ENCODE measurements at regions of chr5 and their contacts with region 1.

Region 1: GRCh38 chr5:148730943-148731861 is 76.9 kb upstream of the HTR4 start:
- DNase-seq: peak; percentile 66 to 90 (median 70)
- ATAC-seq: peak; percentile 89
- H3K4me3 ChIP-seq: no peak overlapping the region
- H3K27ac ChIP-seq: no peak overlapping the region
- H3K4me1 ChIP-seq: peaks cover 0 to 21% of the 10 kb centered on the region in 2 experiments; a peak in 3 of 5 replicates
- H3K27me3 ChIP-seq: peaks cover 0 to 5% of the 10 kb centered on the region in 2 experiments; a peak in 1 of 5 replicates
- CTCF ChIP-seq: peak; percentile 93 to 100 (median 98)
- EP300 ChIP-seq: no peak
- POLR2A ChIP-seq: no peak
- RAD21 ChIP-seq: peak; percentile 97 to 99

Region 2: GRCh38 chr5:147857302-147858129 is 873.7 kb before region 1 on chr5:
- CTCF ChIA-PET with region 1: interaction called, 3 read pairs
- POLR2A ChIA-PET with region 1: no interaction called
- in situ Hi-C with region 1: no loop called
- intact Hi-C with region 1: loop called (anchors 2 kb)
- DNase-seq: peak; percentile 31 to 66 (median 58)
- ATAC-seq: peak; percentile 72
- H3K4me3 ChIP-seq: no peak overlapping the region
- H3K27ac ChIP-seq: no peak overlapping the region
- H3K4me1 ChIP-seq: no peaks in the 10 kb centered on the region
- H3K27me3 ChIP-seq: no peaks in the 10 kb centered on the region
- CTCF ChIP-seq: peak; percentile 60 to 68 (median 66)
- EP300 ChIP-seq: no peak
- POLR2A ChIP-seq: no peak
- RAD21 ChIP-seq: peak; percentile 71

Region 3: GRCh38 chr5:148179234-148179824 is 551.9 kb before region 1 on chr5:
- CTCF ChIA-PET with region 1: interaction called, 28 read pairs
- POLR2A ChIA-PET with region 1: no interaction called
- in situ Hi-C with region 1: loop called (anchors 5 kb)
- intact Hi-C with region 1: loop called (anchors 1 kb)
- DNase-seq: peak in 3 of 4 experiments; percentile 6 to 67 (median 6)
- ATAC-seq: peak; percentile 67; the same call in 2 of the 3 replicates
- H3K4me3 ChIP-seq: no peak overlapping the region
- H3K27ac ChIP-seq: no peak overlapping the region
- H3K4me1 ChIP-seq: no peaks in the 10 kb centered on the region
- H3K27me3 ChIP-seq: no peaks in the 10 kb centered on the region
- CTCF ChIP-seq: peak; percentile 48 to 71 (median 61); a peak in 5 of 6 replicates
- EP300 ChIP-seq: no peak
- POLR2A ChIP-seq: no peak
- RAD21 ChIP-seq: peak; percentile 89

Region 4: DNA sequence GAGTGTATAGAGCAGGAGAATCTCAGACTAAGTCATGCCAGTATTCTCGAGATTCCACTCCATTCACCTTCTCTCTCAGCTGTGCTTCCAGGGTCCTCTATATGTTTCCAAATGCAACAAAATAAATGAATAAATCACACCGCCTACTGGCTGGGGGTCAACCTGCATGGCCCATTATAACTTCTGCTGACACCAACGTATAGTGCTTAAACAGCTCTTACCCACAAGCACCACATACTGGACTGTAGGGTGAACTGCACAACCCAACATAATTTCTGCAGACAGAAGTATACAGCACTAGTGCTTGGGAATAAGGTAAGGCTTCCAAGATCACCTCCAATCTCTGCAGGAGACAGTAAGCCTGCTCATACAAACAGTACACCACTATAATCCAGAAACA is 43.8 kb before region 1 on chr5:
- CTCF ChIA-PET with region 1: no interaction called
- POLR2A ChIA-PET with region 1: interaction called, 3 read pairs
- in situ Hi-C with region 1: no loop called
- intact Hi-C with region 1: loop called (anchors 1 kb)
- DNase-seq: peak; percentile 72 to 85 (median 75)
- ATAC-seq: peak; percentile 97
- H3K4me3 ChIP-seq: no peak overlapping the region
- H3K27ac ChIP-seq: no peak overlapping the region
- H3K4me1 ChIP-seq: peaks cover 0 to 25% of the 10 kb centered on the region in 2 experiments; a peak in 3 of 5 replicates
- H3K27me3 ChIP-seq: no peaks in the 10 kb centered on the region
- CTCF ChIP-seq: peak; percentile 96 to 99 (median 99)
- EP300 ChIP-seq: peak; percentile 13; the same call in 1 of the 2 replicates
- POLR2A ChIP-seq: no peak
- RAD21 ChIP-seq: peak; percentile 62 to 98

Region 5: GRCh38 chr5:149035372-149035790 is 304.2 kb after region 1 on chr5:
- CTCF ChIA-PET with region 1: interaction called, 22 read pairs
- POLR2A ChIA-PET with region 1: no interaction called
- in situ Hi-C with region 1: loop called (anchors 10 kb)
- intact Hi-C with region 1: loop called (anchors 1 kb)
- DNase-seq: peak; percentile 52 to 74 (median 56)
- ATAC-seq: peak; percentile 99
- H3K4me3 ChIP-seq: no peak overlapping the region
- H3K27ac ChIP-seq: no peak overlapping the region
- H3K4me1 ChIP-seq: no peaks in the 10 kb centered on the region; a peak in 1 of 5 replicates
- H3K27me3 ChIP-seq: peaks cover 0 to 16% of the 10 kb centered on the region in 2 experiments; a peak in 3 of 5 replicates
- CTCF ChIP-seq: peak; percentile 84 to 90 (median 90)
- EP300 ChIP-seq: no peak
- POLR2A ChIP-seq: no peak
- RAD21 ChIP-seq: peak; percentile 88 to 89

Region 6: DNA sequence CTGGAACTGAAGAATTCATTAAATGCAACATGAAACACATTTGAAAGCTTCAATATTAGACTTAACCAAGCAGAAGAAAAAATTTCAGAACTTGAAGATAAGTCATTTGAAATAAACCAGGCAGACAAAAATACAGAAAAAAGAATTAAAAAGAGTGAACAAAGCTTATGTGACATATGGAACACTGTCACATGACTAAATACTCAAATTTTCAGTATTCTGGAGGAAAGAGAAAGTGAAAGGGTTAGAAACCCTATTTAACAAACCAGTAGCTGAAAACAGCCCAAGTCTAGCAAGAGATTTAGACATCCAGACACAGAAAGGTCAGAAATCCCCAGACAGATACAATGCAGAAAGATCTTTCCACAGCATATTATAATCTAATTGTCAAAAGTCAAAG is 368.7 kb after region 1 on chr5:
- CTCF ChIA-PET with region 1: no interaction called
- POLR2A ChIA-PET with region 1: no interaction called
- in situ Hi-C with region 1: no loop called
- intact Hi-C with region 1: no loop called
- DNase-seq: no peak
- ATAC-seq: no peak
- H3K4me3 ChIP-seq: no peak overlapping the region
- H3K27ac ChIP-seq: no peak overlapping the region
- H3K4me1 ChIP-seq: no peaks in the 10 kb centered on the region
- H3K27me3 ChIP-seq: no peaks in the 10 kb centered on the region
- CTCF ChIP-seq: no peak
- EP300 ChIP-seq: no peak
- POLR2A ChIP-seq: no peak
- RAD21 ChIP-seq: no peak

Region 7: DNA sequence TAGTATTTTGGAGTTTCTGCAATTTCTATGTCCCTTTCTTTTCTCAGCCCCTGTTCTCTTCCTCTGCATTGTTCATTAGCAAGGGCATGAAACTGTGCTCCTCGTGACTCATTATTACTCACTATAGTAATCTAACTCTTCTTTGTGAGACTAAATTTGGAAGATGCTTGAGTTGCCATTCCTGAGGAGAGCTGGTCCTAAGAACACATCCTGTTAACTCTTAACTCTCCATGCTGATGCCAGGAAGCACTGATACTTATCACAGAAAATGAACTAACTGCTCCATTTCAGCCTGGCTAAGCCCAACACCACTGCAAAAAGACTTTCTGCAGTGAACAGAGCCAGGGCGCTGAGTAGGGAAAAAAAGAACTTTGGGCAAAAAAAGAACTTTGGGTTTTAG is 830.6 kb after region 1 on chr5:
- CTCF ChIA-PET with region 1: no interaction called
- POLR2A ChIA-PET with region 1: no interaction called
- in situ Hi-C with region 1: no loop called
- intact Hi-C with region 1: loop called (anchors 5 kb)
- DNase-seq: peak in 2 of 4 experiments; percentile 36 to 63
- ATAC-seq: peak; percentile 57
- H3K4me3 ChIP-seq: no peak overlapping the region
- H3K27ac ChIP-seq: peak overlapping the region; percentile 53; the same call in 1 of the 3 replicates
- H3K4me1 ChIP-seq: peaks cover 8 to 29% of the 10 kb centered on the region in 2 experiments; a peak in 4 of 5 replicates
- H3K27me3 ChIP-seq: no peaks in the 10 kb centered on the region
- CTCF ChIP-seq: no peak
- EP300 ChIP-seq: peak; percentile 61
- POLR2A ChIP-seq: no peak
- RAD21 ChIP-seq: peak in 1 of 2 experiments; percentile 18; a peak in 1 of 4 replicates